ENCODE measurements at regions of chr4 and their contacts with region 1.

Region 1: GRCh38 chr4:53804719-53805118 is 213.4 kb upstream of the LNX1 start:
- DNase-seq: peak; percentile 23
- ATAC-seq: no peak
- H3K4me3 Mint-ChIP-seq: no peak overlapping the region
- H3K27ac Mint-ChIP-seq: no peak overlapping the region
- H3K4me1 Mint-ChIP-seq: no peaks in the 10 kb centered on the region
- H3K27me3 Mint-ChIP-seq: peaks cover 2% of the 10 kb centered on the region
- CTCF ChIP-seq: no peak

Region 2: DNA sequence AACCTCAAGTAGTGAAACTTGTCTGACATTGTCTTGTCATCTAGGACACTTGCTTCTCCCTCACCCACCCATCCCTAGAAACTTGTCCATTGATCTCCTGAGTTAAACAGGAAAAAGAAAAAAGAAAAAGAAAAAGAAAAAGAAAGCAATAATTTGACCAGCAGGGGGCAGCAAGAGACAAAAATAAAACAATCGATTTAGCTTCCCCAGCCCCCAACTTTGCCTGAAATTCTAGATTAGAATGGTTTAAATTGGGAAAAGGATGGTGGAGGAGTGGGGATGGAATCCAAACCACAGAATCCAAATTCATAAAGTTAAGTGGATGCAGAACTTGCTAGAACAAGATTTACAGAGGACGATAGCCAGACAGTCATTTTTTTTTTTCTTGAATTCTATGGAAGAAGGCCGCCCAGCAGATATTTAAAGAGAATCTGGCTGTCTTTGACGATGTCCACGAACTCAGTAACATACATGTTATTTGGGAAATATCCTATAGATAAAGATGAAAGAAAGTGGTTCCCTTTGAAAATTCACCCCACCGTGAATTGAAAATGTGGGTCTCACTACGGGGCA is 1428.5 kb before region 1 on chr4:
- CTCF ChIA-PET with region 1: no interaction called
- POLR2A ChIA-PET with region 1: no interaction called
- intact Hi-C with region 1: loop called (anchors 10 kb)
- DNase-seq: no peak
- ATAC-seq: no peak
- H3K4me3 Mint-ChIP-seq: no peak overlapping the region
- H3K27ac Mint-ChIP-seq: no peak overlapping the region
- H3K4me1 Mint-ChIP-seq: no peaks in the 10 kb centered on the region
- H3K27me3 Mint-ChIP-seq: peaks cover 12% of the 10 kb centered on the region
- CTCF ChIP-seq: peak; percentile 45

Region 3: DNA sequence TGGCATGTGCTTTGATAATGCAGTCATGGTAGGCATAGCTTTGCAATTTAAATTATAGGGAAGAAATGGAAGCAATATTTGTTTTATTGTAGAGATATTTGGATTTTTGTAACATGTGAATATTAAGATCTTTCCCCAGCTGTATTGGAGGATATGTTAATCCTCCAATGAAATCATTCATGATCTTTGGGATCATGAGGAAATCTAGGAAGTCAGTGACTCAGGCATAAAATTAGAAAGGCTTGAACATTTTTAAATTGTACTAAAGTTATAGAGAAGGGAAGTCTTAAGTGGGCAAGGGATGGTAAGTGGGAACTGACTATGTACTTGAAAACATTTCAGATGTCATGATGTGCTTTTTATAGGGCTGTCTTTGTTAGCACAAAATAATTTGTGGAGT is 380.4 kb before region 1 on chr4:
- CTCF ChIA-PET with region 1: no interaction called
- POLR2A ChIA-PET with region 1: no interaction called
- intact Hi-C with region 1: loop called (anchors 10 kb)
- DNase-seq: no peak
- ATAC-seq: no peak
- H3K4me3 Mint-ChIP-seq: no peak overlapping the region
- H3K27ac Mint-ChIP-seq: no peak overlapping the region
- H3K4me1 Mint-ChIP-seq: no peaks in the 10 kb centered on the region
- H3K27me3 Mint-ChIP-seq: no peaks in the 10 kb centered on the region
- CTCF ChIP-seq: no peak

Region 4: DNA sequence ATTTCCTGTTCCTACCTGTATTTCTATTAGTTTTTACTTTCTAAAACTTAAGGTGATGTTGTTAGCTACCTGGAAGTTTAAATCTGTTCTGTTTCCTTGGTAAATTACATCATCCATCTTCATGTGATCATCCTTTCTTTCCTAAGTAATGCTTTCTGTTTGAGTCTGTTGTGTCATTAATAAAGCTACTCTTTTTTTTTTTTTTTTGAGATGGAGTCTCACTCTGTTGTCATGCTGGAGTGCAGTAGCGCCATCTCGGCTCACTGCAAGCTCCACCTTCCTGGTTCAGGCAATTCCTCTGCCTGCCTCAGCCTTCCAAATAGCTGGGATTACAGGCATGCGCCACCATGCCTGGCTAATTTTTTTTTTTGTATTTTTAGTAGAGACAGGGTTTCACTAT is 353.9 kb before region 1 on chr4:
- CTCF ChIA-PET with region 1: interaction called, 3 read pairs
- POLR2A ChIA-PET with region 1: no interaction called
- intact Hi-C with region 1: loop called (anchors 5 kb)
- DNase-seq: no peak
- ATAC-seq: no peak
- H3K4me3 Mint-ChIP-seq: no peak overlapping the region
- H3K27ac Mint-ChIP-seq: no peak overlapping the region
- H3K4me1 Mint-ChIP-seq: no peaks in the 10 kb centered on the region
- H3K27me3 Mint-ChIP-seq: no peaks in the 10 kb centered on the region
- CTCF ChIP-seq: no peak

Region 5: GRCh38 chr4:53688186-53688790 is 116.4 kb before region 1 on chr4:
- CTCF ChIA-PET with region 1: no interaction called
- POLR2A ChIA-PET with region 1: no interaction called
- intact Hi-C with region 1: no loop called
- DNase-seq: no peak
- ATAC-seq: peak; percentile 37
- H3K4me3 Mint-ChIP-seq: no peak overlapping the region
- H3K27ac Mint-ChIP-seq: no peak overlapping the region
- H3K4me1 Mint-ChIP-seq: peaks cover 5% of the 10 kb centered on the region
- H3K27me3 Mint-ChIP-seq: peaks cover 27% of the 10 kb centered on the region
- CTCF ChIP-seq: no peak

Region 6: DNA sequence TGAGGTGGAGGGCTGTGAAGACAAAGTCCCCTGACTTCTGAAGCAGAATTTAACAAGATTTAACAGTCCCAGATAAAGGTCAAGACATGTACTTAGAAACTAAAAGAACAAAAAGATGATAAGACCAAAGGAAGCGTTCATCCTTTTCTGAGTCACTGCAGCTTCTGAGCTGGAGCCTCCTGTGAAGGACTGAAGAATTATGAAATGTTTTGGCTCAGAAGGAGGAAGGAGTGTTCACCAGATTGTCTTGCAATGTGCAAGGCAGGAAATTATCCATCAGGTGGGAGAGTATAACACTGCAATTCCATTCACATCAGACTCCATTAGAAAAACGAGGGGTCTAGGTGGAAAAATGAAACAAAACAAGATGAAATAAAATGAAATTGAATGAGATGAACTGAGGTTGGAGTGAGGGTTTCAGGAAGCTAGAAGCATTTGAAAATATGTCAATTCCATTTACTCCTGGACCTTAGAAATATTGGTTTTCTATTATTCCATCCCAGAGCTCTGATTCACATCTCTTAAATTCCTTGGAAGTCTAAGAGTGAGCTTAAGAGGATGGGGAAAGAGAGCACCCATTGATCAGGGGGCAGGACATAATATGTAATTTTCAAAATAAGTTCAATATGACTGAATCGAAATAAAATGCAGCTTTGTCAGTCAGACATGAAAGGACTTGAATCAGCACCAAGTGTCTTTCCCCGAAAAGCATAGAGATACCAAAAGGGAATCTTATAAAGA is 27.3 kb before region 1 on chr4:
- CTCF ChIA-PET with region 1: no interaction called
- POLR2A ChIA-PET with region 1: no interaction called
- intact Hi-C with region 1: no loop called
- DNase-seq: no peak
- ATAC-seq: no peak
- H3K4me3 Mint-ChIP-seq: no peak overlapping the region
- H3K27ac Mint-ChIP-seq: no peak overlapping the region
- H3K4me1 Mint-ChIP-seq: no peaks in the 10 kb centered on the region
- H3K27me3 Mint-ChIP-seq: peaks cover 14% of the 10 kb centered on the region
- CTCF ChIP-seq: no peak

Measured in activated B cell treated with CpG ODN at 0.5 μM for 24 hours (primary cell).